ENCODE measurements at regions of chr1 and their contacts with region 1.

Region 1: DNA sequence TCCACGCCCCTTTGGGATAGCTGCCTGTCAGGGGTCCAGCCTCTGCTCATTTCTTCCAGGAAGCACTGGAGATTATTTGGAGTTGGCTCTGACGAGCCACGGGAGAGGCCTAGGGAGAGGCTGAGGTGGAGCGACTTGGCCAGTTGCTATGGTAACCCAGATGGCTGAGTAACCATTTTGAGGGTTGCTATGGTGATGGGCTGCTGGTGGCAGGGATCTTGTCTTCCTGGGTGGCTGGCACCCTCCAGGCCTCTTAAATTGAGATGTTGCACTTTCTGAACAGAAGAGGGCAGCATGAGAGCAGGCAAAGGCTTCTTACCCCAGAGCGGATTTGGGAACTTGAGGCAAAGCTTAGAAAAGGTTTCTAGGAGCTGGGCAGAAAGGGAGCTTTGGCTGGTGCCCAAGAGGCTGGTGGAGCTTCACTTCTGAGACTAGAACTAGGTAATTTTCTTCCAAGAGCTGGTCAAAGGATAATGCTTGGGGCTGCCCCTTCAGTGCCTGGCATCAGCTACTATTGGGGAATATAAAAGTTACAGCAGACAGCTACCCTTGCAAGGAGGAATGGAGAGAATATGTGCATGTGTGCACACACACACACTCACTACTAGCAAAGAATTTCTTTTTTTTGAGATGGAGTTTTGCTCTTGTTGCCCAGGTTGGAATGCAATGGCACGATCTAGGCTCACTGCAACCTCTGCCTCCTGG is 72.5 kb downstream of the NDUFS5 start:
- DNase-seq: peak; percentile 80 to 83 (median 83)
- ATAC-seq: peak; percentile 83
- H3K4me3 ChIP-seq: no peak overlapping the region
- H3K27ac ChIP-seq: no peak overlapping the region
- H3K4me1 ChIP-seq: peaks cover 0 to 10% of the 10 kb centered on the region in 2 experiments; a peak in 3 of 5 replicates
- H3K27me3 ChIP-seq: no peaks in the 10 kb centered on the region
- CTCF ChIP-seq: peak; percentile 89 to 96 (median 89)
- EP300 ChIP-seq: no peak
- POLR2A ChIP-seq: no peak
- RAD21 ChIP-seq: peak; percentile 90 to 91

Region 2: DNA sequence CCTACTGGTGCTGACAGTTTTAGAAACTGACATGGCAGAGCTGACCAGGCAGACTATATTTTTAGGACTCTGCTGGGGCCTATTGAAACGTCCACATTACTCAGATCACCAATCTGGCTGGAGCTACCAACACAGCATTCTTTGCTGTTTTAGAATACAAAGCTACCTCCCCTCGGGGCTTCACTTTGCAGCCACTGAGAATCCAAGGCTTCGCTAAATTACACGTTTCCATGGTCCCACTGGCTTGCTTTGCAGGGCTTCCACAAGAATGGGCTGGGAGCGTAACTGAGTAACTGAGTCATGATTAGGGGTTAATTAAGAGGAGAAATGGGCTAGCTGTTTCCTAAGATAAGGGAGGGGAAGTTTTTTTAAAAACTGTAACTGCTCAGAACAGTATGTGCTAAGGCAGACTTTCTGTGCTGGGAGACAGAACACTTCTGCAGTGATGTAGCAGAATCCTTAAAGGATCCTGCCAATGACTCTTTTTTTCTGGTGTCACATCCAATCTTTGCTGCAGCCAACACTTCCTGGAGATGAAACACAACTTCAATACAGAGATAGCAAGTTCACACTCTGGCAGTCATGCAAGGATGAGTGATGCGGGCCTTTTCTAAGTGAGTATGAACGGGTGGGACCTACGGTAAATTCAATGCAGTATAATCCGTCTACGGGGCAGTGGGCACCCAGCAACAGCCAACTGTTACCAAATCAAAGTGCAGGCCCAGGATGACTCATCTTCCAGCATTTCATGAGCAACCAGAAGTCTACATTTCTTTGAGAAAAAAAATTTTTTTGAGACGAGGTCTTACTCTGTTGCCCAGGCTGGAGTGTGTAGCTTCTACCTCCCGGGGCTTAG is 51.1 kb before region 1 on chr1:
- CTCF ChIA-PET with region 1: no interaction called
- POLR2A ChIA-PET with region 1: no interaction called
- in situ Hi-C with region 1: no loop called
- intact Hi-C with region 1: no loop called
- DNase-seq: peak; percentile 63 to 72 (median 66)
- ATAC-seq: peak; percentile 65
- H3K4me3 ChIP-seq: no peak overlapping the region
- H3K27ac ChIP-seq: peak overlapping the region; percentile 49
- H3K4me1 ChIP-seq: peaks cover 29 to 30% of the 10 kb centered on the region in 2 experiments
- H3K27me3 ChIP-seq: no peaks in the 10 kb centered on the region
- CTCF ChIP-seq: no peak
- EP300 ChIP-seq: peak; percentile 17; the same call in 1 of the 2 replicates
- POLR2A ChIP-seq: no peak
- RAD21 ChIP-seq: no peak

Region 3: GRCh38 chr1:39183503-39184353 is 85.0 kb after region 1 on chr1:
- CTCF ChIA-PET with region 1: interaction called, 14 read pairs
- POLR2A ChIA-PET with region 1: interaction called, 3 read pairs
- in situ Hi-C with region 1: loop called (anchors 5 kb)
- intact Hi-C with region 1: loop called (anchors 1 kb)
- DNase-seq: peak; percentile 50 to 85 (median 60)
- ATAC-seq: peak; percentile 88
- H3K4me3 ChIP-seq: no peak overlapping the region
- H3K27ac ChIP-seq: peak overlapping the region; percentile 61; the same call in 2 of the 3 replicates
- H3K4me1 ChIP-seq: peaks cover 17 to 30% of the 10 kb centered on the region in 2 experiments
- H3K27me3 ChIP-seq: no peaks in the 10 kb centered on the region
- CTCF ChIP-seq: peak; percentile 69 to 79 (median 73)
- EP300 ChIP-seq: peak; percentile 55; the same call in 1 of the 2 replicates
- POLR2A ChIP-seq: no peak
- RAD21 ChIP-seq: peak; percentile 52 to 68

Region 4: DNA sequence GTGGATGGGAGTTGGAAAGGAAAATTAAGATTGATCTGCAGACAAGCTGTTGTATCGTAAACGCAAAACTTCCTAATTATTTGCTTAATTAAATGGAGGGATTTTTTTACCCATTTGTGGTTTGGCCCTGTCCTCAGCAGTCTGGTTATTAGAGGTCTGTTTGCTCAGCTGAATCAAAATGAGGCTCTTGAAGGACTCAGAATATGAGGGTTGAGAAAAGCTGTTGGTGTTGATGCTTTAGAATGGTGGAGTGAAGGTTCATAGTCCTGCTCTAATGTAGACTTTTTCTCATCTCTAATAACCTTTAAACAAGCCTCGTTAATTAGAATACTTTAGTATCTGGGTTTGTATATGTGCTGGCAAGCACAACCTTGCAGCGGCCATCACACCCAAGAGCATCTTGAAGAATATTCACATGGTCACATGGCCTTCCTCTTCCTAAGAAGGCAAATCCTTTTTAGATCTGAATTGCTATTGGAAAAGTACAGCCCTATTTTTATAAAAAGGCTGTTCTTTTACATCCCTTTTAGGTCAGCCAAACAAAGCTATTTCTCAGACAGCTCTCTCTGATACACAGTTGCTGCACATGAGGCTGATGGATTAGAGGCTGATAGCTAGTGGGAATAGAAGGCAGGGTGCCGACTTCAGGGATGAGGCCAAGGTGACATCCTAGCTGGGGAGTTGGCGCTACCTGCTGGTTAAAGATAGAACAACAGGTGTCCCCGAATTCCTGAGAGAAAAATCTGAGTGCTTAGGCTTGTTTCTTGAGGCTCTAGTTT is 159.6 kb after region 1 on chr1:
- CTCF ChIA-PET with region 1: interaction called, 13 read pairs
- POLR2A ChIA-PET with region 1: interaction called, 4 read pairs
- in situ Hi-C with region 1: loop called (anchors 5 kb)
- intact Hi-C with region 1: loop called (anchors 1 kb)
- DNase-seq: peak; percentile 78 to 85 (median 82)
- ATAC-seq: peak; percentile 92
- H3K4me3 ChIP-seq: no peak overlapping the region
- H3K27ac ChIP-seq: no peak overlapping the region
- H3K4me1 ChIP-seq: no peaks in the 10 kb centered on the region
- H3K27me3 ChIP-seq: no peaks in the 10 kb centered on the region
- CTCF ChIP-seq: peak; percentile 89 to 97 (median 95)
- EP300 ChIP-seq: no peak
- POLR2A ChIP-seq: no peak
- RAD21 ChIP-seq: peak; percentile 97 to 99

Region 5: DNA sequence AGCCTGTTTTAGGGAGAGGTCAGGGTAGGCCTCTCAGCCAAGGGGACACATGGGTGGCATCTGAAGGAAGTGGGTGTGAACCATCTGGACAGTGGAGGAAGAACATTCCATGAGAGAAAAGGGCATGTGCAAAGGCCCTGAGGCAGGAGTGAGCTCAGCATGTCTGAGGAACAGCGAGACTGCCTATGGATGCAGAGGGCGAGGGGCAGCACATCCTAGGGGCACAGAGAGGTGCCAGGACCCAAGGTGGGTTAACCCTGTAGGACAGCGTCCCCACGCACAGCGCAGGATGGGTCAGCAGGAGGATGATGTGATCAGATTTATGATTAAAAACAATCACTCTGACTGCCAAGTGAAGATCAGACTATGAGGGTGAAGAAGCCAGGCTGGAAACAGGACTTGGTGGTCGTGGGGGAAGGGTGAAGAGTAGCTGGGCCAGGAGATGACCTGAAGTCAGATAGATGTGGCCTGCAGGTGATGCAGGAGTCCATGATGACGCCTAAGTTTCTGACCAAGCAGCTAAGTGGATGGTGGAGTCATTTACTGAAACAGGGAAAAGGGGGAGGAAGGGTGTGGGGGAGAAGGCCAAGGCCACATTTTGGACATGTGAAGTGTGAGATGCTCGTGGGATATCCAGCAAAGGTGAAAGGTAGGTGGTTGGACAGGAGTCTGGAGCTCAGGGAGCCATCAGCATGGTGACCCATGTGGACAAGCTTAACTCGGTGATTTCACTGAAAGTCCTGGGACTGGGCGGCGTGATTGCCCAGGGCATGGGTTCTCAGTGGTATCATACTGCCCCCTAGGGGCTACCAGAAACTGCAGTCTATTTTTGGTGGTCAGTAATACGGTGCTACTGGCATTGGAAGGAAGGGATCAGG is 440.1 kb after region 1 on chr1:
- CTCF ChIA-PET with region 1: no interaction called
- POLR2A ChIA-PET with region 1: no interaction called
- in situ Hi-C with region 1: loop called (anchors 5 kb)
- intact Hi-C with region 1: loop called (anchors 1 kb)
- DNase-seq: peak; percentile 82 to 89 (median 88)
- ATAC-seq: peak; percentile 99
- H3K4me3 ChIP-seq: no peak overlapping the region
- H3K27ac ChIP-seq: no peak overlapping the region
- H3K4me1 ChIP-seq: no peaks in the 10 kb centered on the region
- H3K27me3 ChIP-seq: no peaks in the 10 kb centered on the region
- CTCF ChIP-seq: peak; percentile 92 to 98 (median 97)
- EP300 ChIP-seq: no peak
- POLR2A ChIP-seq: no peak
- RAD21 ChIP-seq: peak; percentile 81 to 93